ENCODE measurements at regions of chr10 and their contacts with region 1.

Region 1: GRCh38 chr10:75229971-75230370 is 5.8 kb downstream of the COMTD1 start:
- DNase-seq: no peak
- ATAC-seq: no peak
- H3K4me3 ChIP-seq: no peak overlapping the region
- H3K27ac ChIP-seq: peak overlapping the region in 5 of 10 donors; percentile 3 to 90 (median 30)
- H3K4me1 ChIP-seq: peaks cover 16 to 75% (median 64%) of the 10 kb centered on the region in 9 donors
- H3K27me3 ChIP-seq: no peaks in the 10 kb centered on the region
- CTCF ChIP-seq: no peak

Region 2: GRCh38 chr10:75187961-75188426 is 42.0 kb before region 1 on chr10:
- intact Hi-C with region 1: loop called in 8 of 10 experiments (anchors 1 to 5 kb)
- DNase-seq: peak in 1 of 2 donors; percentile 52
- ATAC-seq: peak in 7 of 8 donors; percentile 18 to 60 (median 35)
- H3K4me3 ChIP-seq: no peak overlapping the region
- H3K27ac ChIP-seq: peak overlapping the region in 4 of 10 donors; percentile 1 to 39 (median 20)
- H3K4me1 ChIP-seq: peaks cover 0 to 38% (median 20%) of the 10 kb centered on the region in 9 donors
- H3K27me3 ChIP-seq: no peaks in the 10 kb centered on the region
- CTCF ChIP-seq: peak; percentile 47 to 80 (median 70)

Measured in heart right ventricle (tissue), 16 donors.